Activated B cell treated with CpG ODN at 0.5 μM for 24 hours (primary cell): ENCODE measurements at regions of chrX and their contacts with region 1.

Region 1: DNA sequence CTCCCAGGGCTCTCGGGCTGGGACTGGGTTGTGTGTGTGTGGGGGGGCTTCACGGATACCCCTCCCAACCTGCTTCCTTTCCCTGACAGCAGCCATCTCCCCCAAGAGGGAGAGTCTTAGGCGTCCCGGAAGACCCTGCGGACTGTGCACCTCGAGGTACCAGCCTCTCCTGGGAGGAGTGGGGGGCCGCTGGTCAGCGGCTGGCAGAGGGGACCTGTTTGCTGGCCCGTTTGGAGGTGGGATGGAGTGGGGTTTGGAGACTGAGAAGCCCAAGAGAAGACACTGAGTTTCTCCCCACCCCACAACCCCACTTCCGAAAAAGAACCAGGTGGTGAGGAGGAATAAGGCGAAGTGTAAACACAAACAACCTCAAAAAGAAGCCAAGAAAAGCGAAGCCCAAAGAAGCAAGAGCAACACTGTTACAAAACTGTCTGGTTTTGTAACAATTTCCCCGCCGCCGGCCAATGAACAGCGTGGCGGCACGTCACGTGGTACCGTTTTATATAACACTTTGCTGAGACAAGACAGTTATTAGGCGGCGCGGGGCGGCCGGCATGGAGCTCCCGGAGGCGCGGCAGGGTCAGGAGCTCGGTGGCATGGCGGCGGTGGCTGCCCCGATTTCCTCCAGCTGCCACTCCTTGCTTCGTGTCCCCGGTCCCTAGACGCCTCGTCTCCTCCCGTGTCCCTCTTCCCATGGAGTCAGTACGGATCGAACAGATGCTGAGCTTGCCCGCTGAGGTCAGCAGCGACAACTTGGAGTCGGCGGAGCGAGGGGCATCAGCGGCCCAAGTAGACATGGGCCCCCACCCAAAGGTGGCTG is at the start of gene LONRF3:
- DNase-seq: peak; percentile 41
- ATAC-seq: peak; percentile 40
- H3K4me3 Mint-ChIP-seq: peak within 1 kb of the TSS; percentile 83
- H3K27ac Mint-ChIP-seq: peak within 1 kb of the TSS; percentile 50
- H3K4me1 Mint-ChIP-seq: peaks cover 12% of the 10 kb centered on the region
- H3K27me3 Mint-ChIP-seq: peaks cover 8% of the 10 kb centered on the region
- CTCF ChIP-seq: no peak
- total RNA-seq, gene LONRF3: 1.3 TPM in 2 replicates

Region 2: DNA sequence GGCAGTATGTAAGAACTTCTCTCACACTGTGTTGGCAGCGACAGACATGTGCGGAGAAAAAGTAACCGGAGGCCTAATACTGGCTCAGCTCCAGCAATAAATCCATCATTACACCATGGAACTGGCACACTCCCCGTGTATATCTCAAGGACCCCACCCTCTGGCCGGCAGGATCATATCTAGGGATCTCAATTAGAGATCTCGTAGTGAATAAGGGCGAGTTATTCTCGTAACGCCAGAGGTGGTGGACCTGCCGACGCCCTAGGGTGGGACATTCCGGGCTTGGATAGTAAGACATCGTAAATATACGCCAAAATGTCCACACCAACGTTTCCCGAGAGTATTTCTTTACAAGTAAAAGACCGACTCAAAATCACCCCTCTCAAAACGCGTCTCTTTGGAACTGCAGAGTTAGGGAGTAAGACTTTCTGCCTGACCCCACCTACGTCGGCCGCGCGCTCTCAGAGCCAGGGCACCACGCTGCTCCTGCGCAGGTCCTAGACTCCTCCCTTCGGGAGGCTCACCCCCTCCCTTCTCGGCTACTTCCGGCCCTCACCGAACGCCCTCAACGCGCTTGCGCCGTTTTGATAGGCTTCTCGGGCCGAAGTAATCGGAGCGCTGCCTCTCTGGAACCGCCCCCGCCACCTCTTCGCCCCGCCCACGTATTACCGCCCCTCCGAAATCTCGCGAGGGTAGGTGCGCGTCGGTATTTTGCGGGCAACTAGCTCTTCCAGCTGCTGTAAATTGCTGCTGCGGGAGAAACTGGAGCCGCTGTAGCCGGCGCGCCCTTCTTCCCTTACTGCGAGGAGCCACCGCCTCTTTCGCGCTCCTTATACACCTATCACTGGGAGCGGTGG is 628.7 kb before region 1 on chrX and contains the start of gene WDR44:
- CTCF ChIA-PET with region 1: no interaction called
- POLR2A ChIA-PET with region 1: no interaction called
- intact Hi-C with region 1: loop called (anchors 2 kb)
- DNase-seq: peak; percentile 82
- ATAC-seq: peak; percentile 89
- H3K4me3 Mint-ChIP-seq: peak within 1 kb of the TSS; percentile 98
- H3K27ac Mint-ChIP-seq: peak within 1 kb of the TSS; percentile 97
- H3K4me1 Mint-ChIP-seq: peaks cover 39% of the 10 kb centered on the region
- H3K27me3 Mint-ChIP-seq: no peaks in the 10 kb centered on the region
- CTCF ChIP-seq: no peak
- total RNA-seq, gene WDR44: 15.3 and 18.7 TPM in 2 replicates

Region 3: DNA sequence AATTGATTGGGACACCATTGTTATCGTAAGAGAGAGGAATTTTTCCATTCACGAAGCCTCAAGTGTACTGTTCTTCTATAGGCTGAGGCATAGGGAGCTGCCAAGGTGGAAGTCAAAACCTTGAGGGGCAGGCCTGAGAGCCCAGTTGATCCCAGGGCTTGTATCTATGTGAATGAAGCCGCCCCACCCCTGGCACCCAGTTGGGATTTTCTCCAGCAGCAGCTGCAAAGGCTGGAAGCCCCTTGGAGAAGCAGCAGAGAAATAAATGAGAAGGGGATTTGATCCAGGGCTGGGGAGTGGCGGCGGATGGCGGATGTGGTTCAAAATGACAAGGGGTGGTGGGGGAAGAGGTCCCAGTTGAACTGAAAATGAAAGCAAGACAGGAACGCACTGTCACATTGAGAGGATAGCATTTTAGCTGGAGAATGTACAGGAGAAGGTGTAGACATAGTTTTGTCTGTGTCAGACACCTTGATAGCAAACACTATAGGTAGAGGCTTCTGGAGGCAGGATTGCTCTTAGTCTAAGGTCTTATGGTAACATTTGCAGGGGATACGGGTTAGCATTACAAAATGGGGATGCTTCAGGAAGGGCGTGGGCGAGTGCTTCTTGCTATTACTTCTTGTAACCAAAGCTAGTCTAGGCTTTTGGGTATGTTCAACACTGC is 446.1 kb before region 1 on chrX:
- CTCF ChIA-PET with region 1: no interaction called
- POLR2A ChIA-PET with region 1: no interaction called
- intact Hi-C with region 1: no loop called
- DNase-seq: peak; percentile 20
- ATAC-seq: peak; percentile 71
- H3K4me3 Mint-ChIP-seq: peak overlapping the region; percentile 88
- H3K27ac Mint-ChIP-seq: peak overlapping the region; percentile 97
- H3K4me1 Mint-ChIP-seq: peaks cover 82% of the 10 kb centered on the region
- H3K27me3 Mint-ChIP-seq: no peaks in the 10 kb centered on the region
- CTCF ChIP-seq: no peak

Region 4: GRCh38 chrX:118637997-118638396 is 336.3 kb before region 1 on chrX:
- CTCF ChIA-PET with region 1: no interaction called
- POLR2A ChIA-PET with region 1: no interaction called
- intact Hi-C with region 1: loop called (anchors 10 kb)
- DNase-seq: no peak
- ATAC-seq: no peak
- H3K4me3 Mint-ChIP-seq: no peak overlapping the region
- H3K27ac Mint-ChIP-seq: no peak overlapping the region
- H3K4me1 Mint-ChIP-seq: peaks cover 10% of the 10 kb centered on the region
- H3K27me3 Mint-ChIP-seq: no peaks in the 10 kb centered on the region
- CTCF ChIP-seq: no peak

Region 5: DNA sequence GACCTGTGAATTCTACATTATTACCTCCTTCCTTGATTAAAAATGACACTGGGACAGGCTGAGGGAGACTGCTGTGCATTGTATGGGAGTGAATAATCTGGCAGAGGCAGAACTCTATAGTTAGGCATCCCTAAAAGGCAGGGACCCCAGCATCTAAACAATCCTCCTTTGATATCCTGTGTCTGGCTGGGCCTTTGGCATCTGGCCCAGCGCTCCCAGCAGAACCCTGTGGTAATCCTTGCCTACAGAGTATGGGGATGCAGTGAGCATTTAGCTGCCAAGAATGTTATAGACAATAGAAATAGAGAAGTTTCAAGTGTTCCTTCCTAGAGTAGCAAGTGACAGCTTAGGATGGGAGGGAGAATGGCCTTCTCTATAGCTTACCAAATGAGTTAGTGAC is 112.2 kb before region 1 on chrX:
- CTCF ChIA-PET with region 1: no interaction called
- POLR2A ChIA-PET with region 1: no interaction called
- intact Hi-C with region 1: no loop called
- DNase-seq: no peak
- ATAC-seq: no peak
- H3K4me3 Mint-ChIP-seq: no peak overlapping the region
- H3K27ac Mint-ChIP-seq: no peak overlapping the region
- H3K4me1 Mint-ChIP-seq: no peaks in the 10 kb centered on the region
- H3K27me3 Mint-ChIP-seq: peaks cover 4% of the 10 kb centered on the region
- CTCF ChIP-seq: no peak

Region 6: DNA sequence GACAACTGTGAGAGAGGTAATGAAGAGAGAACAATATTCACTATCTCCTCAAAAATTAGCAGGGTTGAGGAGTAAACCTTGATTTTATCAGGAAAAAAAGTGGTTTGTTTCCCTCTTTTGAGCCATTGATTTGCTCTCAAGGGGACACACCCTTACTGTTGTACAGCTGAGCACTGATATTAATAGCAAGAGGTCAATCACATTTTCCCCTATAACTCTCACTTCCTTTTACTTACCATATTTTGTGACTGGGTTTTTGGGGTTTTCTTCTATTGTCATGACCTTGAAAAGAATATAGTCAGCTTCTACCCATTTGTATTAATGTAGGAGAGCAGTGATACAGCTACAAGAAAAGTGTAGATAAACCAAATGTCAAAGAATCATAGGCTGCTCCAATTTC is 70.1 kb before region 1 on chrX:
- CTCF ChIA-PET with region 1: no interaction called
- POLR2A ChIA-PET with region 1: interaction called, 3 read pairs
- intact Hi-C with region 1: loop called (anchors 2 kb)
- DNase-seq: no peak
- ATAC-seq: peak; percentile 79
- H3K4me3 Mint-ChIP-seq: peak overlapping the region; percentile 52
- H3K27ac Mint-ChIP-seq: peak overlapping the region; percentile 31
- H3K4me1 Mint-ChIP-seq: peaks cover 46% of the 10 kb centered on the region
- H3K27me3 Mint-ChIP-seq: no peaks in the 10 kb centered on the region
- CTCF ChIP-seq: no peak

Region 7: DNA sequence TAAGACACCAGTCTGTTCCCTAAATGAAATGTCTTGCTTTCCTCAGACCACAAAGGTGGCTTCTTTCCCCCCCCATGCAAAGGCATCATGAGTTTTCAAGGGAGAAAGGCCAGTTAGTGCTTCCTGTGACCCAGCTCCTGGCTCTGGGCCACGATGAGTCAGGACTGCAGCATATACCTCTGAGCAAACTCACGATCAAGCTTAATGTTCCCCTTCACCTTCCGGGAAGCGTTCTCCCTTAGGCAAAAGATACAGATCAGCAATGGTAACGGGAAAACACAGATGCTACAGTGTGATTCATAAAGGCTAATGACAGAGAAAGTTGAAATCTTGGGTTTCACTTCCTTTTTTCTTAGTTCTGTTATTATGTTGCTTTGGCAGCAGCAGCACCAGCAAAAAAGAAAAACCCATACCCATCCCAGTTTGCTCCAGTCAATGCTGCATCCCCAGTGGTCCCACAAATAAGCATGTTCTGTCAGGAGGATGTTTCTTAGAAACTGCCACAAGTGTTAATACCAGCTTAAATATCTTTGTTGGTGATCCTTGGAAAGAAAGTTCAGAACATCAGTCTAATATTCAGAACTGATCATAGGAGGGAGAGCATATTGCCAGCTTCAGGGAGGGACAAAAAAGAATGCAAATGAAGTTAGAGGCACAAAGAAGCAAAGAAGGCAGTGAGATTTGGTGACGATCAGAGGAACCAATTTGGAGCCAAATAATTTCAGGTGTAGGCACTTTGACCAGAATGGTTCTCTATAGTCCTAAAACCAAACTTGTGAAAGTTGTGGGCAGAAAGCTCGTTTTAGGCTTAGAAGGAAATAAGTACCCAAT is 41.3 kb after region 1 on chrX:
- CTCF ChIA-PET with region 1: no interaction called
- POLR2A ChIA-PET with region 1: interaction called, 3 read pairs
- intact Hi-C with region 1: loop called (anchors 1 kb)
- DNase-seq: peak; percentile 23
- ATAC-seq: peak; percentile 90
- H3K4me3 Mint-ChIP-seq: peak overlapping the region; percentile 53
- H3K27ac Mint-ChIP-seq: peak overlapping the region; percentile 94
- H3K4me1 Mint-ChIP-seq: peaks cover 28% of the 10 kb centered on the region
- H3K27me3 Mint-ChIP-seq: no peaks in the 10 kb centered on the region
- CTCF ChIP-seq: no peak

Region 8: DNA sequence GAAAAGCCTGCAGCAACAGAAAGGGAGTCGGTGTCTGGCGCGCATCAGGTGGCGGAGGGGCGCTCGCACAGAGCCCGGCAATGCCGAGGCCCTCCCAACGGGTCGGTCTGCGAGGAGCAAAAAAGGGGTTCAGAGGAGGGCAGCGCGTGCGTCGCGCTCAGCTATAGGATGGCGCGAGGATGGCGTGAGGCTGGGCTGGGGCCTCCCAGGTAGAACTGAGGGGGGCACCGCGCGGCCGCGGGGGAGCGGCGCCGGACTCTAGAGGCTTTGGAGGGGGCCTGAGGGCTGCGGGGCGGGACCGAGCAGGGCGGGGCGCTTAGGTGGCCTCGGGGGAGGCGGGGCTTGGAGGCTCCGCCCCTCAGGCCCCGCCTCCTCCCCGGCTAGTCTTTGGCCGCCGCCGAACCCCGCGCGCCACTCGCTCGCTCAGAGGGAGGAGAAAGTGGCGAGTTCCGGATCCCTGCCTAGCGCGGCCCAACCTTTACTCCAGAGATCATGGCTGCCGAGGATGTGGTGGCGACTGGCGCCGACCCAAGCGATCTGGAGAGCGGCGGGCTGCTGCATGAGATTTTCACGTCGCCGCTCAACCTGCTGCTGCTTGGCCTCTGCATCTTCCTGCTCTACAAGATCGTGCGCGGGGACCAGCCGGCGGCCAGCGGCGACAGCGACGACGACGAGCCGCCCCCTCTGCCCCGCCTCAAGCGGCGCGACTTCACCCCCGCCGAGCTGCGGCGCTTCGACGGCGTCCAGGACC is 261.7 kb after region 1 on chrX and contains the start of gene PGRMC1:
- CTCF ChIA-PET with region 1: no interaction called
- POLR2A ChIA-PET with region 1: no interaction called
- intact Hi-C with region 1: loop called (anchors 10 kb)
- DNase-seq: peak; percentile 64
- ATAC-seq: peak; percentile 97
- H3K4me3 Mint-ChIP-seq: peak within 1 kb of the TSS; percentile 89
- H3K27ac Mint-ChIP-seq: peak within 1 kb of the TSS; percentile 82
- H3K4me1 Mint-ChIP-seq: peaks cover 16% of the 10 kb centered on the region
- H3K27me3 Mint-ChIP-seq: no peaks in the 10 kb centered on the region
- CTCF ChIP-seq: no peak
- total RNA-seq, gene PGRMC1: 8.5 and 9.8 TPM in 2 replicates